ENCODE measurements at regions of chr17 and their contacts with region 1.

Region 1: DNA sequence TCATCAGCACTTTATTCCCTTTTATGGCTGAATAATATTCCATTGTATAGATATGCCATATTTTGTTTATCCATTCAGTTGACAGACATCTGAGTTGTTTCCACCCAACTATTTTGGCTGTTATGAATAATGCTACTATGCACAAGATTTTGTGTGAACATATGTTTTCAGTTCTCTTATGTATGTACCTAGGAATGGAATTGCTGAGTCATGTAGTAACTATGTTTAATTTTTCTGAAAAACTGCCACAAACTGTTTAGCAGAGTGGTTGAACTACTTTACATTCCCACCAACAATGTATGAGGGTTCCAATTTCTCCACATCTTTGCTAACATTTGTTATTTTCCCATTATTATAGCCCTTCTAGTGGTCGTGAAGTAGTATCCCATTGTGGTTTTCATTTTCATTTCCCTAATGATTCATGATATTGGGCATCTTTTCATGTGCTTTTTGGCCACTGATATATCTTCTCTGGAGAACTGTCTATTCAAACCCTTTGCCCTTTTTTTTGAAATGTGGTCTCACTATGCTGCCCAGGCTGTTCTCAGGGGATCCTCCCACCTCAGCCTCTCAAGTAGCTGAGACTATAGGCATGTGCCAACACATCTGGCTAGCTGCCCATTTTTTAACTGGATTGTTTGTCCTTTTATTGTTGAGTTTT is 26.3 kb downstream of the SMURF2 start:
- DNase-seq: peak; percentile 38
- CTCF ChIP-seq: no peak

Region 2: DNA sequence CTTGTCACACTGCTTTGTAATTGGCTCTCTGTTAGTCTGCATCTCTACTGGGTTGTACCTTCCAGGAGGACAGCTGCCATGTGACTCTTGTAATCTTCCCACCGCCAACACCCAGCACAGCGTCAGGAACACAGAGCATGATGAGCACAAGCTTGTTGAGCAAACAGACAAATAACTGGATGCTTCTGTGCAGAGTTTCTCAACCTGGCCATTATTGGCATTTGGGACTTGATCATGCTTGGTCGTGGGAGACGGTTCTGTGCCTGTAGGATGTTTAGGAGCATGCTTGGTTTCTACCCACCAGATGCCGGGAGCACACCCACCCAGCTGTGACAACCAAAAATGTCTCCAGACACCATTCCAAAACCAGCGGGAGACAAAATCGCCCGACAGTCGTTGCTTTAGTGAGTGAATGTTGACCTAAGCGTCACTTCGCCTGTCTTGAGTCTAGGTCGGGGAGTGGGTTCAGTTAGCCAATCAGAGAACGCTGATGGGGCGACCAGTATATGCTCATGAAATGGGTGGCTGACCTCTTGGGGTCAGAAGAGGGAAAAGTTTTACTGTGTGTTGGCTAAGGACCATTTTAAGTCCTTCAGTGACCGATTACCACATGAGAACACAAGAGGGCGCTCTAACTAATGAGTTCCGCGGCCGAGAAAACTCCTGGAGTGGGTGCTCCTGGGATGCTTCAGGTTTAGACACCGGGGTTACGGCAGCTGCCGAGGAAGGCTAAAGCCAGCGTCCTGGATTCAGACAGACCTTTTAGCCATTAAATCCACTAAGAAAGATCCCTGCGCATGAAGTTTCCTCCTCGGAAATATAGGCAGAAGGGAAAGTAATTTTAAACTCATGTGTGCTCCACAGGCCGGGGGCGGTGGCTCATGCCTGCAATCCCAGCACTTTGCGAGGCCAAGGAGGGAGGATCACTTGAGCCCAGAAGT is 314.9 kb before region 1 on chr17:
- in situ Hi-C with region 1: loop called (anchors 25 kb)
- DNase-seq: peak; percentile 80
- CTCF ChIP-seq: peak; percentile 69

Measured in GM13976 (cell line).